Activated CD8-positive, alpha-beta T cell treated with anti-CD3 and anti-CD28 coated beads, Interleukin-2, amount 10 ng/mL, durations not matched to agents 7 days and 5 days (primary cell): ENCODE measurements at regions of chr11 and their contacts with region 1.

Region 1: DNA sequence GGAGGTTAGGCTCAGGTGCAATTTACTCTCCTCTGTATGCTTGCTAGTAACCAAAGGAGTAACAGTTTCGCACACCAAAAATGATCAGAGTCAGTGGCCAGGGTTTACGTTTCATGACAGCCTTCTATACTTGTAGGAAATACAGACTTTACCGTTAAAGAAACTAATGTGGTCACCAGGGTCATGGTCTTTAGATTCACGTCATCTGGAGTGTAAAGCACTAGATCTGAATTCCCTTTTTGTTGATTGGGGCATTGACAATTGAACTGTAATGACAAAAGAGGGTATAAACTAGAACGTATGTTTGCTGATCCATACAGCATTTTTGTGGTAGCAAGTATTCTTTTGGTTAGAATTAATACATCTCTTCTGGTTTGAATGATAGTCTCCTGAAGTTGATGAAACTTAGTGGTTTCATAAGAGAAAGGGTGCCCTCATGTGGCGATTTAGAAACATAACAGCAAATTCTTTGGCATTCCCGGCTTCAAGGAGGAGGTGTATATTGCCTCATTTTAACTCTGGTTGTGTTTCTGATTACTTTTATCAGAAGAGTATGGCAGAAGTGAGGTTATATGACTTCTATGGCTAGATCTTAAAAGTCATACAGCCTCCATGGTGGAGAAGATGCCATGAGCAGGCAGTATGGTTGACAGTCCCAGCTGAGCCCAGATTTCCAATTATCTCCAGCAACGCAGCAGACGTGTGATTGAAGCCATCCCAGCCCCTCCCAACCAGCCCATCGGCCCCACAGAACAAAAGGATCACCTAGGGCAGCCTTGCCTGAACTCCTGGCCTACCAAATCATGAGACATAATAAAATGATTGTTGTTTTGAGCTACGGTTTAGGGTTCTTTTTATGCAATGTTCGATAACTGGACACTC is 35.1 kb downstream of the MMP7 start:
- DNase-seq: peak; percentile 68
- ATAC-seq: peak; percentile 78
- H3K4me3 Mint-ChIP-seq: no peak overlapping the region
- H3K27ac Mint-ChIP-seq: peak overlapping the region; percentile 9
- H3K4me1 Mint-ChIP-seq: peaks cover 27% of the 10 kb centered on the region
- H3K27me3 Mint-ChIP-seq: peaks cover 14% of the 10 kb centered on the region

Region 2: DNA sequence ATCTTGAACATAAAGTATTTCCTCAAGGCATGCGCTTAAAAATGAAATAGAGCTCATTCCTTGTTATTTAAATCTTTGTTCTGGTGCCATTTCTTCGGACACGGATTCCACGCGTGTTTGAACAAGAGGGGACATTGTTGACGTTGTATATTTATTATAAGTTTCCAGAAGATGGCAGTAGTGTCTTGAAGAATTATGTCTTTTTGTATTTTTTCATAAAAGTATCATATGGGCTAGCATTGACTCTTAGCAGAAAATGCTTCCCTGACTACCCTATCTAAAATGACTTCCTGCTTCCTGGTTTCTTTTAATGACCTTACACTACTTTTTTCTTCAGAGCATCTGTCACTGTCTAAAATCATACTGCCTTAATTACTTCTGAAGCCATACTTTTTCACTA is 128.0 kb before region 1 on chr11:
- CTCF ChIA-PET with region 1: interaction called, 45 read pairs
- POLR2A ChIA-PET with region 1: no interaction called
- DNase-seq: no peak
- ATAC-seq: peak; percentile 64
- H3K4me3 Mint-ChIP-seq: no peak overlapping the region
- H3K27ac Mint-ChIP-seq: peak overlapping the region; percentile 37
- H3K4me1 Mint-ChIP-seq: peaks cover 29% of the 10 kb centered on the region
- H3K27me3 Mint-ChIP-seq: no peaks in the 10 kb centered on the region

Region 3: DNA sequence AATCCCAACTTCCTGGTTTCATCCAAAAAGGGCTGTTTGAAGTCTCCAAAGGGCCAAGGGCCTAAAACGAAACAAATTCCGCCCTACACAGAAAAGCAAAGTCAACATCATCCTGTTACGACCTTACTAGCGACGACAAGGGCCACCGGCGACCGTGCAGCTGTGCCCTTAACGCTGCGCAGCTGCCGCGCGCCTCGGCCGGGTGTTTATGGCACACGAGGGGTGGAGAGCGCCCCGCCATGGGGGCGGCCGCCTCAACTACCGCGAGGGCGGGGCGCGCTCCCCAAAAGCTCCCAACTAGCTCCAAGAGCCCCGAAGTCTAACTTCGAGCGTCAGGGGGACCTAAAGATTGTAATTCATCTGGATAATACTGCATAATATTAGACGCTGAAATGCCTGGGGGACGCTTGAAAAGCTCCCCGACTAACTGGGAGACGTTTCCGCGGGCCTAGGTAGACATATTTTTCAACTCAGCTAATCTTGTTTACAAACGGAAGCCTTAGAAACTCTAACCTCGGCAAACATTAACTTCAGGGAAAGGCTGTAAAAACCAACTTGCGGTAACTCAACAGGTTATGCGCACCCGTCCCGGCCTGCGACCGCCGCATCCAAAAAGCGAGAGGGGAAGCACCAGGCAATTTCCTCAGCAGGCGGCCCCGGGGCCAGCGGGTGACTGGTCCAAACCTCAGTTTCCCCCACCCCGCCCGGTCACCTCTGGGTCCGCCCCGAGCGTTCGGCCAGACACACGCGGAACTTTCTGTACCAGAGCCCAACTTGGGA is 43.5 kb before region 1 on chr11:
- CTCF ChIA-PET with region 1: interaction called, 11 read pairs
- POLR2A ChIA-PET with region 1: interaction called, 6 read pairs
- DNase-seq: peak; percentile 87
- ATAC-seq: peak; percentile 61
- H3K4me3 Mint-ChIP-seq: peak overlapping the region; percentile 97
- H3K27ac Mint-ChIP-seq: peak overlapping the region; percentile 92
- H3K4me1 Mint-ChIP-seq: peaks cover 77% of the 10 kb centered on the region
- H3K27me3 Mint-ChIP-seq: no peaks in the 10 kb centered on the region

Region 4: DNA sequence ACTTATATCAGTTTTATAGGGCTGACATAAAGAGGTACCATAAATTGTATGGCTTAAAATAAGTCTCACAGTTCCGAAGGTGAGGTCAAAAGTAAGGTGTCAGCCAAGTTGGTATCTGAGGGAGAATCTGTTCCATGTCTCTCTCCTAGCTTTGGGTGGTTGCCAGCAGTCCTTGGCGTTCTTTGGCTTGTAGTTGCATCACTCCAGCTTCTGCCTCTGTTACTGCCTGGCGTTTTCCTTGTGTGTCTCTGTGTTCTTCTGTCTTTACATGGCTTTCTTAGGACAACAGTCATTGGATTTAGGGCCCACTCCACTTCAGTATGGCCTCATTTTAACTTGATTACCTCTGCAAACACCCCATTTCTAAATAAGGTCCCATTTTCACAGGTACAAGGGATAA is 18.5 kb after region 1 on chr11:
- CTCF ChIA-PET with region 1: interaction called, 12 read pairs
- POLR2A ChIA-PET with region 1: no interaction called
- DNase-seq: no peak
- ATAC-seq: no peak
- H3K4me3 Mint-ChIP-seq: no peak overlapping the region
- H3K27ac Mint-ChIP-seq: no peak overlapping the region
- H3K4me1 Mint-ChIP-seq: no peaks in the 10 kb centered on the region
- H3K27me3 Mint-ChIP-seq: peaks cover 8% of the 10 kb centered on the region